H1 (cell line): ENCODE measurements at regions of chr7 and their contacts with region 1.

Region 1: GRCh38 chr7:2597273-2597640 is 34.5 kb upstream of the TTYH3 start:
- DNase-seq: no peak
- H3K4me3 ChIP-seq: no peak overlapping the region
- H3K27ac ChIP-seq: no peak overlapping the region
- H3K4me1 ChIP-seq: peaks cover 0 to 3% (median 1%) of the 10 kb centered on the region in 4 experiments; a peak in 2 of 7 replicates
- H3K27me3 ChIP-seq: no peaks in the 10 kb centered on the region
- CTCF ChIP-seq: no peak
- EP300 ChIP-seq: no peak
- POLR2A ChIP-seq: no peak
- RAD21 ChIP-seq: no peak

Region 2: GRCh38 chr7:2288503-2288902 is 308.8 kb before region 1 on chr7:
- CTCF ChIA-PET with region 1: no interaction called
- POLR2A ChIA-PET with region 1: no interaction called
- DNase-seq: no peak
- H3K4me3 ChIP-seq: no peak overlapping the region
- H3K27ac ChIP-seq: no peak overlapping the region
- H3K4me1 ChIP-seq: no peaks in the 10 kb centered on the region; a peak in 3 of 7 replicates
- H3K27me3 ChIP-seq: no peaks in the 10 kb centered on the region; a peak in 1 of 7 replicates
- CTCF ChIP-seq: no peak
- EP300 ChIP-seq: no peak
- POLR2A ChIP-seq: no peak
- RAD21 ChIP-seq: no peak

Region 3: DNA sequence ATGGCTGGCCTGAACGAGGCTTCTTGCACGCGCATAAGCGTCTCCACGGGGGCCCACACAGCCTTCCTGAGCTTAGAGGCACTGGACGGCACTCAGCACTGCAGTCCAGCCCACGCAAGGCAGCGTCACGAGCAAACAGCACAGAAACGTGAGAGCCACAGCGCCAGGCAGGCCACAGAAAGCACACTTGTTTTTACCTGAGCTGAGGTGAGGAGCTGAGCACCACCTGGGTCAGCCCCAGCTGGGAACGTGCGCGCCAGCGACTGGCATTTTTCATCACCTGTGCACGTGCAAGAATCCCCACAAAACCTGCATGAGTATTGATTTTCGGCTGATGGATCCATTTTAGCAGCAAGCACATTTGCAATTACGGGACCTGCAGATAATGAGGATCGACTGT is 11.8 kb before region 1 on chr7:
- CTCF ChIA-PET with region 1: interaction called, 30 read pairs
- POLR2A ChIA-PET with region 1: interaction called, 4 read pairs
- DNase-seq: no peak
- H3K4me3 ChIP-seq: no peak overlapping the region
- H3K27ac ChIP-seq: no peak overlapping the region
- H3K4me1 ChIP-seq: peaks cover 0 to 11% (median 3%) of the 10 kb centered on the region in 4 experiments; a peak in 3 of 7 replicates
- H3K27me3 ChIP-seq: no peaks in the 10 kb centered on the region
- CTCF ChIP-seq: no peak
- EP300 ChIP-seq: no peak
- POLR2A ChIP-seq: no peak
- RAD21 ChIP-seq: no peak